CD4-positive, alpha-beta T cell (primary cell): ENCODE measurements at regions of chr3 and their contacts with region 1.

Region 1: GRCh38 chr3:180912304-180913296 is at the start of gene FXR1:
- DNase-seq: peak; percentile 79 to 94 (median 85)
- ATAC-seq: peak; percentile 90
- H3K4me3 ChIP-seq: peak within 1 kb of the TSS; percentile 98
- H3K4me3 Mint-ChIP-seq: peak within 1 kb of the TSS; percentile 97
- H3K27ac ChIP-seq: peak within 1 kb of the TSS; percentile 89 to 94
- H3K27ac Mint-ChIP-seq: peak within 1 kb of the TSS; percentile 94
- H3K4me1 ChIP-seq: peaks cover 29% of the 10 kb centered on the region
- H3K4me1 Mint-ChIP-seq: peaks cover 65% of the 10 kb centered on the region
- H3K27me3 ChIP-seq: no peaks in the 10 kb centered on the region
- H3K27me3 Mint-ChIP-seq: no peaks in the 10 kb centered on the region
- CTCF ChIP-seq: peak; percentile 68
- total RNA-seq, gene FXR1: 172 to 174 TPM

Region 2: DNA sequence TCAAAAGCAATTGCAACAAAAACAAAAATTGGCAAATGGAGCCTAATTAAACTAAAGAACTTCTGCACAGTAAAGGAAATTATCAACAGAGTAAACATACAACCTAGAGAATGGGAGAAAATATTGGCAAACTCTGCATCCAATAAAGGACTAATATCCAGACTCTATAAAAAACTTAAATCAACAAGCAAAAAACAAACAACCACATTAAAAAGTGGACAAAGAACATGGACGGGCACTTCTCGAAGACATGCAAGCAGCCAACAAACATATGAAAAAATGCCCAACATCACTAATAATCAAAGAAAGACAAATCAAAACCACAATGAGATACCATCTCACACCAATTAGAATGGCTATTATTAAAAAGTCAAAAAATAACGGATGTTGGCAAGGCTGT is 75.3 kb before region 1 on chr3:
- CTCF ChIA-PET with region 1: no interaction called
- POLR2A ChIA-PET with region 1: no interaction called
- intact Hi-C with region 1: no loop called
- DNase-seq: no peak
- ATAC-seq: no peak
- H3K4me3 ChIP-seq: no peak overlapping the region
- H3K4me3 Mint-ChIP-seq: no peak overlapping the region
- H3K27ac ChIP-seq: no peak overlapping the region
- H3K27ac Mint-ChIP-seq: no peak overlapping the region
- H3K4me1 ChIP-seq: no peaks in the 10 kb centered on the region
- H3K4me1 Mint-ChIP-seq: no peaks in the 10 kb centered on the region
- H3K27me3 ChIP-seq: no peaks in the 10 kb centered on the region
- H3K27me3 Mint-ChIP-seq: no peaks in the 10 kb centered on the region
- CTCF ChIP-seq: no peak

Region 3: GRCh38 chr3:180989291-180990163 is 76.9 kb after region 1 on chr3 and contains the start of gene DNAJC19:
- CTCF ChIA-PET with region 1: no interaction called
- POLR2A ChIA-PET with region 1: interaction called, 41 read pairs
- intact Hi-C with region 1: loop called (anchors 2 to 5 kb)
- DNase-seq: peak; percentile 82 to 97 (median 85)
- ATAC-seq: peak; percentile 96
- H3K4me3 ChIP-seq: peak within 1 kb of the TSS; percentile 85
- H3K4me3 Mint-ChIP-seq: peak within 1 kb of the TSS; percentile 99
- H3K27ac ChIP-seq: peak within 1 kb of the TSS; percentile 65 to 66
- H3K27ac Mint-ChIP-seq: peak within 1 kb of the TSS; percentile 94
- H3K4me1 ChIP-seq: peaks cover 8% of the 10 kb centered on the region
- H3K4me1 Mint-ChIP-seq: peaks cover 50% of the 10 kb centered on the region
- H3K27me3 ChIP-seq: no peaks in the 10 kb centered on the region
- H3K27me3 Mint-ChIP-seq: peaks cover 5% of the 10 kb centered on the region
- CTCF ChIP-seq: no peak
- total RNA-seq, gene DNAJC19: 28.7 to 40.2 TPM